Colonic mucosa (tissue), 4 donors: ENCODE measurements at regions of chr18 and their contacts with region 1.

Region 1: DNA sequence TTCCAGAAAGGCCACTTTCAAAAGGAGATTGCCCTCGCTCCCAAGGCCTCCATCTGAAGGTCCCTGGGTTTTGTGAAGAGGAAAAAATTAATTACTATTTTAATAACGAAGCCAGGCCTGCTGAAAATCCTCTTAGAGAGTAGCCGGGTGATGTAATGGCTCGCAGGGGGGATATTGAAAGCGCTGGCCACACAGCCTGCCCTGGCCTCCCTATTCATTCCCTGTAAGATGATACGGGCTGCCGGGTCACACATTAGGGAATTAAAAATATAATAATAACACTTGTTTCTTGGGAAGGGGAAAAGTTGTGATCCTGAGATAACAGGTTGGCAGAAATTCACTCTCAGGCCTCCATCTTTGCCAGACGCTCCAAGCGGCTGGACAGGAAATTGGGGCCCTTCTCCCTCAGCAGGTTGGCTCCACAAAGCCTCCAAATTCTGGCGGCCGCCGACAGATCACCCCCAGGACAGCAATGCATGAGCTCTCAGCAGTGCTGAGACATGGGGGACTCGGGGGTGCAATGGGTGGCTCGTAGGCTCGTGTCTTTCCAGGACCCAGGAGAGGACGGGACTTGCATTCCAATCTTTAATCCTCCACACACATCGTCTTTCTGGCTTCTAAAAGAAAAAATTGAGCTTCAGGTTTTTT is 299.9 kb upstream of the SALL3 start:
- DNase-seq: no peak
- H3K4me3 ChIP-seq: no peak overlapping the region
- H3K27ac ChIP-seq: no peak overlapping the region
- H3K4me1 ChIP-seq: no peaks in the 10 kb centered on the region
- H3K27me3 ChIP-seq: no peaks in the 10 kb centered on the region
- CTCF ChIP-seq: no peak

Region 2: DNA sequence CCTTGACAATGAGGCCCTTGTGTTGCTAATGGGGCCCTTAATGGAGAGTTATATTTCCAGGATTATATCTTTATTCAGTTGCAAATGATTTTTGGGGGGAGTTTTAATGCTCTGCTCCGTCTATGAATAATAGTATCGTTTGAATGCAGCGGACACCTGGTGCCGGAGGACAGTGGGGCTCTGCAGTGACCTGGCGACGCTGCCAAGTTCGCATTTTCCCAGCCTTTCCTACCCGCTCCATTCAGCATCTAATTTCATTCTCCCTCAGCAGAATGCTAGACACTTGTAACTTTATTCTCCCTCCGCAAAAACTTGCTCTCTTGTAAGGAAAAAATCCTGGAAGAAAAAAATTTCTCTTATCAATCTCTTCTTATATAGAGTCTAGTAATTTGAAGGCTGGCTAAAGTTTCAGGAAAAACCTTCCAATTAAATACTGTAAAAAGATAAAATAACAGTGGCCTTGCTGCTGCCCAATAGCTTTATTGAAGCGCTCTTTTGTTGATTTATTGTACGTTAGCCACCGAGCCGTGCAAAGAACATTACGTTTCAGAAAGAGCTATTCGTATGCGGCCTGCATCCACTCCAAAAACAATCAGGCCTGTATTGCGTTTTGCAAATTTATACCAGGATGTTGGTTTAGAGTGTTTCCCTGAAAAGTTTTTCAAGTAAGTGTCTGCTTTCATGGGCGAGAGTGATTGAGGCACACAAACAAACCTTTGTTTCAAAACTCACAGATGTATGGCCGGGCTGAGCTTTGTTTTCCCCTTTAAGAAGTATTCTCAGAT is 42.5 kb after region 1 on chr18:
- intact Hi-C with region 1: no loop called
- DNase-seq: no peak
- H3K4me3 ChIP-seq: no peak overlapping the region
- H3K27ac ChIP-seq: no peak overlapping the region
- H3K4me1 ChIP-seq: no peaks in the 10 kb centered on the region
- H3K27me3 ChIP-seq: no peaks in the 10 kb centered on the region
- CTCF ChIP-seq: no peak

Region 3: GRCh38 chr18:78742218-78742745 is 62.5 kb after region 1 on chr18:
- intact Hi-C with region 1: loop called (anchors 10 kb)
- DNase-seq: no peak
- H3K4me3 ChIP-seq: no peak overlapping the region
- H3K27ac ChIP-seq: no peak overlapping the region
- H3K4me1 ChIP-seq: no peaks in the 10 kb centered on the region
- H3K27me3 ChIP-seq: no peaks in the 10 kb centered on the region
- CTCF ChIP-seq: no peak